Activated CD4-positive, alpha-beta memory T cell treated with anti-CD3 and anti-CD28 coated beads, Interleukin-2, amount 10 ng/mL, durations not matched to agents 7 days and 5 days (primary cell): ENCODE measurements at regions of chr2 and their contacts with region 1.

Region 1: DNA sequence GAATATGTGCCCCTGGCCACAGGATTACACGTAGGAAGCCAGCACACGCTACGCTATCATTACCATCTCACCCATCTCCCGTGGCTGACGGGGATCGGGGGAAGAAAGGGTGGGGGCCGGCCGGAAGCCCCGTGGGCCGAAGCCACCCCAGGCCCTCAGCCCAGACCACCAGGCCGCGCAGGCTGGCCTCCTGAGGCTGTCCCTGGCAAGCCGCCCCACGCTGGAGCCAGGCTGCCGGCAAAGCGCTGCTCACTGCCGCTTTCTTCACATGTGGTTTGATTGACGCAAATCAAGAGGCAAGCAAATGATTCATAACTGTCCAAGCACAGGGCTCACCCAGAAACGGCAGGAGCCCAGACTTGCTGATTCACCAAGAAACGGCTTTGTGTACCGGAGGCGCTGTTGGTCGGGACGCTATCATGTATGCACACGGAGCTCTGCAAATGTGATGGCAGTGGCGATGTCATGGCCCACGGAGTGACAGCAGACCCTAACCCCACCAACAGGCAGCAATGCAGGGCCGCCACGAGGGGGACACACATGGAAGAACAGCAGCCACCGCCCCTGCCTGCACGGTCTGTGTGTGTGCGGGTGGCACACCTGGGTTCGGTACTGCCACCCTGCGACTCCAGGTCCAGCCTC is 125.7 kb downstream of the HDAC4 start:
- DNase-seq: peak; percentile 90
- H3K4me3 Mint-ChIP-seq: peak overlapping the region; percentile 63
- H3K27ac Mint-ChIP-seq: peak overlapping the region; percentile 92
- H3K4me1 Mint-ChIP-seq: peaks cover 83% of the 10 kb centered on the region
- H3K27me3 Mint-ChIP-seq: peaks cover 14% of the 10 kb centered on the region

Region 2: DNA sequence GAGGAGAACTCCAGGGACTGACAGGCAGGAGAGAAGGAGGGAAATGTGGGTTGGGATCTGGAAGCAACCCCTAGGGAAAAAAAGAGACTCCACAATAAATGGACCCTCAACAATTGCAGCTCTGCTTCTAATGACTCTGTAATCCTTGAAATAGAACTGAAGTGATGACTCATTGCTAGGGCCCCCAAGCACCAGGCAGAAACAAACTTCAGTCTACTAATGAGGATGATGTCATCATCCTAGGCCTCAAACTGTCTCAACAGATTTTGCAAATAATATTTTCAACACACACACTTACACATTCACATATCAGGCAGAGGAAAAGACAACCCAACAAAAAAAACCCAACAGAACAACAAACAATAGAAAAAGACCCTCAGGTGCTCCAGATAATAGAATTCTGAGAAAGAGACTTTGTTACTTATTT is 17.6 kb before region 1 on chr2:
- CTCF ChIA-PET with region 1: interaction called, 3 read pairs
- POLR2A ChIA-PET with region 1: interaction called, 20 read pairs
- DNase-seq: no peak
- H3K4me3 Mint-ChIP-seq: peak overlapping the region; percentile 8
- H3K27ac Mint-ChIP-seq: peak overlapping the region; percentile 95
- H3K4me1 Mint-ChIP-seq: peaks cover 78% of the 10 kb centered on the region
- H3K27me3 Mint-ChIP-seq: no peaks in the 10 kb centered on the region

Region 3: DNA sequence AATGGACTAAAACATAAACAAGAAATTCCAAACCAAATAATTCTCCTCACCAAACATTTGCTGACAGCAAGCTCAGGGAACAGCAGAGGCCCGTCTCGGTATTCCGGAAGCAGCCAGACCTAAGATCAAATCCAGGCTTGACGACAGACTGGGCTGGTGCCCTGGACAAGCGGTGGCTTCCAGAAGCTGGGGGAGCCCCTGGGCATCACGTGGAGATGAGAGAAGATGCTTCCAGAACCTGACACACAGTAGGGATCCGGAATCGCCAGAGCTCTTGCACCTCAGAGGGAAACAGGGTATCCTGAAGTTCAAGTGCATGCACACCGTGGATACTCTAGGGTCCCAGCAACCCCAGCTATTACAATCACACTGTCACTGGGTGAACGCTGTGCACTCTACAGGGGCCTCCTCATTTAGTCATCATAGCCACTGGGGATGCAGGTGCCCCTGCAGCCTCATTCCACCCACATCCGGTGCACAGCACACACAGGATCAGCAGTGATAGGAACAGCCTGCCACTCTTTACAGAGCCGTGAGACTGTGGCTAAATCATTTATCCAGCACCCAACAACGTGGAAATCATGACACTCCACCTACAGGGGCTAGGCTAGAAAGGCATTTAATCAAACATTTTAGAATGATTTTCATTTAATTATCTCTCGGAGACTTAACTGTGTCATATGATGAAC is 23.1 kb after region 1 on chr2:
- CTCF ChIA-PET with region 1: interaction called, 8 read pairs
- POLR2A ChIA-PET with region 1: interaction called, 22 read pairs
- DNase-seq: peak; percentile 87
- H3K4me3 Mint-ChIP-seq: peak overlapping the region; percentile 76
- H3K27ac Mint-ChIP-seq: peak overlapping the region; percentile 92
- H3K4me1 Mint-ChIP-seq: peaks cover 69% of the 10 kb centered on the region
- H3K27me3 Mint-ChIP-seq: peaks cover 13% of the 10 kb centered on the region

Region 4: GRCh38 chr2:239326831-239327535 is 51.8 kb after region 1 on chr2:
- CTCF ChIA-PET with region 1: interaction called, 3 read pairs
- POLR2A ChIA-PET with region 1: interaction called, 25 read pairs
- DNase-seq: peak; percentile 82
- H3K4me3 Mint-ChIP-seq: peak overlapping the region; percentile 9
- H3K27ac Mint-ChIP-seq: peak overlapping the region; percentile 88
- H3K4me1 Mint-ChIP-seq: peaks cover 80% of the 10 kb centered on the region
- H3K27me3 Mint-ChIP-seq: no peaks in the 10 kb centered on the region

Region 5: DNA sequence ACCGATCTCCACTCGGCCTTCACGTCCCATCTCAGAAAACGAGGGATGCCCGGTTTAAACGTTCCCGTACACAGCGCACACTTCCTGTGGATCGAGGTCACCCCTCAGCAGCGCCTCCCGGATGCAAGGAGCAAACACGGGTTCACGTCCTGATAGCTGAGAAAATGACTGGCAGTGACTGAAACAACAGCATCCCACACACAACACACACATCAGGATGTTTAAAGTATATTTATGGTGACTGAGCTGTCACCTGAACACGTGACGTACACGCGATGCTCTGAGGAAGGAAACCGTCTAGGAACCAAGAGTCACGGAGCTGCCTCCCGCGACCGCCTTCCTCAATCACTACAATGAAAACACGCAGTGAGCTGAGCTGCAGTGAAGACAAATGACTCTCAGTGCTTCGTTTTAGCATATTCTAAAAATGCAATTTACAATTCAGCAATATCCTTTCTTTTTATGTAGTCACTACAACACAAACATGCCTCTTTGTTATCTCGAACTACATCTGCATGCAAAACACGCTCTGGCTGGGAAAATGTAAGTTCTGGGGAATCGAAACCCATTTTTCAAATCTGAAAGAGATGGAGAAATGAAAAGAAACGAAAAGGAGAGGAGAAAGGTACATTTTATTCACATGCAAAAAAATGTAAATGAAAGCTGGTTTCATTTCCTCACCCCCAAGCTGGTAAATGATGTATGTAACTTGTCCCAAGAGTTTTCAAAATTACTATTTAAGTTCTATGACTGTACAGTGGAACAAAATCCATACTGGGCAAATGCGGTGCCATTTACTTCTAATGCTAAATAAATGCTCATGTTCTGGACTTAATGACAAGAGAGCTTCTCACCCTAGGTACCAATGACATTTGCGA is 105.9 kb after region 1 on chr2:
- CTCF ChIA-PET with region 1: interaction called, 5 read pairs
- POLR2A ChIA-PET with region 1: interaction called, 12 read pairs
- DNase-seq: peak; percentile 77
- H3K4me3 Mint-ChIP-seq: peak overlapping the region; percentile 66
- H3K27ac Mint-ChIP-seq: peak overlapping the region; percentile 93
- H3K4me1 Mint-ChIP-seq: peaks cover 31% of the 10 kb centered on the region
- H3K27me3 Mint-ChIP-seq: no peaks in the 10 kb centered on the region